Activated CD8-positive, alpha-beta memory T cell treated with anti-CD3 and anti-CD28 coated beads, Interleukin-2, amount 10 ng/mL, durations not matched to agents 7 days and 5 days (primary cell): ENCODE measurements at regions of chr6 and their contacts with region 1.

Region 1: GRCh38 chr6:107674995-107675738 is 148.9 kb downstream of the SCML4 start:
- DNase-seq: peak; percentile 93
- ATAC-seq: peak; percentile 99
- H3K4me3 Mint-ChIP-seq: peak overlapping the region; percentile 50
- H3K27ac Mint-ChIP-seq: peak overlapping the region; percentile 88
- H3K4me1 Mint-ChIP-seq: peaks cover 21% of the 10 kb centered on the region
- H3K27me3 Mint-ChIP-seq: peaks cover 2% of the 10 kb centered on the region

Region 2: DNA sequence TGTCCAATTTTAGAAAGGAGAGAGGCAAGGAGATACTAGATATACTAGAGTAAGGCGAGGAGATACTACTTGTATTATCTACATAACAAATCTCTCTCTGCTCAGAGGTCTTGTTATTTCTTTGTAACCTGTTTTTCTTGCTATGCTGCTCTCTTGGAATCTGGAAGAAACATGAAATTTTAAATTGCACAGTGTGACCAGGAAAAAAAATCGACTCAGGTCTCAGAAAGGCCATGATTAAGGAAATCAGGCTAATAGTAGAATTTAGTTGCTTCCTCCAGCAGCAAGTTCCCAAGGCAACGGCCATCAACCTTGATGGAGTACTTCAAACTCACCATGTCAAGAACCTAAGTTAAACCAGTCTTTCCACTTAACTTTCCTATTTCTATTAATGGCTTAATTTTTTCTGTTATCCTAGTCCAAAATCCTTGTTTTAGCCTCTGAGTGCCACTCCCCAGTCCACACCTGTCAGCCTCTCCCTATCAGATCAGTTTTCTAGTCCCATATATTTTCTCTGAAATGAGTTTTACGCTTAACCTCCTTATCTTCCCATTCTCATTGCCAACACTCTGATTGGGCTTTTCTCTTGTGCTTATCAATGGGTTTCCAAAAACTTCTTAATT is 472.2 kb before region 1 on chr6:
- CTCF ChIA-PET with region 1: no interaction called
- DNase-seq: no peak
- ATAC-seq: no peak
- H3K4me3 Mint-ChIP-seq: no peak overlapping the region
- H3K27ac Mint-ChIP-seq: no peak overlapping the region
- H3K4me1 Mint-ChIP-seq: no peaks in the 10 kb centered on the region
- H3K27me3 Mint-ChIP-seq: no peaks in the 10 kb centered on the region

Region 3: GRCh38 chr6:107318100-107318736 is 356.9 kb before region 1 on chr6:
- CTCF ChIA-PET with region 1: interaction called, 27 read pairs
- DNase-seq: peak; percentile 61
- ATAC-seq: peak; percentile 80
- H3K4me3 Mint-ChIP-seq: no peak overlapping the region
- H3K27ac Mint-ChIP-seq: no peak overlapping the region
- H3K4me1 Mint-ChIP-seq: peaks cover 7% of the 10 kb centered on the region
- H3K27me3 Mint-ChIP-seq: no peaks in the 10 kb centered on the region

Region 4: DNA sequence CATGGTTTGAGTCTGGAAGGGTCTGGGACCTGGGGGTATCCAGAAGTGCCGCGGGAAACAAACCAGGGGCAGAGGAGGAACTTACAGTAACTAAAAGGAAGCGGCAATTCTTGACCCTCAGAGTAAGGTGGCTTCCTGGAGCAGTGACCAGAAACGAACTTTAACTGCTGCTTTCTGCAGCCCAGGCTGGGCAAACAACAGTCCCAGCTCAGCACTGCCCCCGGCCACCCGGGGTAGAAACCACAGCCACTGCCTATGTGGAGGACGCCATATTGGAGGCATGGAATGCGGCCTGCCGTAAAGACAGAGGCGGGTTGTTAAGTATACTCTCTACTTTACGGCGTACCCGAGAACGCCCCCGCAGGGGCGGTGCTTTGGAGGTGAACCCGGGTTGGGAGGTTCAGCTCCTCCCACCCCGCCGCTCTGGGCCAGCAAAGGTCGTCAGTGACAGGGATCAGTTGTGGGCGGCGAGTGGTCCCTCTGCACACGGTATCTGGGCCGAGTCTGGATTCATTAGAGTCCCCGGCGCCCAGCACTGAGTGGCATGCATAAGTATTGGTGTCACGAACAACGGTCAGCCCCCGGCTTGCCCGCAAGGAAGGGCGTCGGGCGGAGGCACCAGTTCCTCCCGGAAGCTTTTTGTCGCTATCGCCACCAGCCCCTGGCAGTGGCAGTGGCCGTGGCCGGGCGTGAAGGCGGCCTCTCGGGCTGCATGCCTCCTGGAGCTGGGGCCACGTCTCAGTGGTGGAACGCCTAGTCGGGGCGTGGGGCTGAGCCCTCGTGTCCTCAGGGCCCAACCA is 215.7 kb before region 1 on chr6 and contains the start of gene PDSS2:
- CTCF ChIA-PET with region 1: interaction called, 18 read pairs
- DNase-seq: peak; percentile 99
- ATAC-seq: peak; percentile 97
- H3K4me3 Mint-ChIP-seq: peak within 1 kb of the TSS; percentile 90
- H3K27ac Mint-ChIP-seq: peak within 1 kb of the TSS; percentile 96
- H3K4me1 Mint-ChIP-seq: peaks cover 11% of the 10 kb centered on the region
- H3K27me3 Mint-ChIP-seq: no peaks in the 10 kb centered on the region
- total RNA-seq, gene PDSS2: 13.1 to 16.9 TPM

Region 5: GRCh38 chr6:107866606-107867301 is 191.6 kb after region 1 on chr6:
- CTCF ChIA-PET with region 1: interaction called, 27 read pairs
- DNase-seq: peak; percentile 51
- ATAC-seq: peak; percentile 61
- H3K4me3 Mint-ChIP-seq: no peak overlapping the region
- H3K27ac Mint-ChIP-seq: peak overlapping the region; percentile 5
- H3K4me1 Mint-ChIP-seq: peaks cover 4% of the 10 kb centered on the region
- H3K27me3 Mint-ChIP-seq: no peaks in the 10 kb centered on the region